ENCODE measurements at regions of chr3 and their contacts with region 1.

Region 1: GRCh38 chr3:122356415-122356814 is 26.6 kb downstream of the MIX23 start:
- DNase-seq: peak; percentile 79
- H3K4me3 ChIP-seq: no peak overlapping the region
- H3K27ac ChIP-seq: no peak overlapping the region
- H3K4me1 ChIP-seq: peaks cover 3% of the 10 kb centered on the region
- H3K27me3 ChIP-seq: no peaks in the 10 kb centered on the region
- CTCF ChIP-seq: peak; percentile 33

Region 2: GRCh38 chr3:122305818-122306621 is 50.4 kb before region 1 on chr3:
- intact Hi-C with region 1: loop called (anchors 2 kb)
- DNase-seq: peak; percentile 62
- H3K4me3 ChIP-seq: no peak overlapping the region
- H3K27ac ChIP-seq: no peak overlapping the region
- H3K4me1 ChIP-seq: no peaks in the 10 kb centered on the region
- H3K27me3 ChIP-seq: no peaks in the 10 kb centered on the region
- CTCF ChIP-seq: peak; percentile 25

Measured in colonic mucosa (tissue), 4 donors.